A549 (cell line): ENCODE measurements at regions of chr19 and their contacts with region 1.

Region 1: GRCh38 chr19:57850553-57851017 is 926 bp downstream of the ZNF587 start:
- DNase-seq: peak; percentile 15 to 41
- ATAC-seq: peak; percentile 10 to 11; a peak in 3 of 6 replicates
- H3K4me3 ChIP-seq: peak overlapping the region; percentile 58
- H3K27ac ChIP-seq: peak overlapping the region; percentile 78 to 89
- H3K4me1 ChIP-seq: peaks cover 5% of the 10 kb centered on the region; the same call in 1 of the 3 replicates
- CTCF ChIP-seq: no peak
- EP300 ChIP-seq: no peak
- POLR2A ChIP-seq: no peak
- RAD21 ChIP-seq: no peak

Region 2: DNA sequence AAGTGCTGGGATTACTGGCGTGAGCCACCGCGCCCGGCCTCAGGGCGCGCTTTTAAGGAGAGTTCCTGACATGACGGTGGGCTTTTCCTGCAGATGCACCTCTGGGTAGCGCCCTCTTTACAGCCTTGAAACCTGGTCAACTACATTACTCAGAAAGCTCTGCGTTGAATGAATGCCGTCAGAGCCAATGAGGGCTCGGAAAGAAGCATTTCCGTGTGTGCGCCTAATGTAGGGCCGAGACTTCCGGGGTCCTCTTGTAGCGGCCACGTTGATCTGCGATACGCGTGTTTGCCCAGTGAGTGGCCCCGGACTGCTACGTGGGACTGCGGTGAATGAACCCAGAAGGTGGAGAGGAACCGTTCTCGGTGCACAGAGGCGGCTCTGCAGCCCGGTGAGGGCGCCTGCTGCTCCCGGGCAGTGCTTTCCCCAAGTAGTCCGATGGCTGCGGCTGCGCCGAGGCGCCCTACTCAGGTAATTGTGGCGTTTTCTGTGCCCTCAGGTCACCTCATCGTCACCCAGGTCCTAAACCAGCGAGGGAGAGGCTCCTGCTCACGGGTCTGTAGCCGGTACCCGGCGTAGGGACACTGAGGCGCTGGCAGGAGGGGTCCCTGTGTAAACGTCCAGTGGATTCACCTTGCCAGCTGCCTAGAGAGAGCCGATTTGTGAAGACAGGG is 31.0 kb before region 1 on chr19:
- CTCF ChIA-PET with region 1: no interaction called
- POLR2A ChIA-PET with region 1: interaction called, 13 read pairs
- DNase-seq: peak; percentile 97 to 99
- ATAC-seq: peak; percentile 93 to 94
- H3K4me3 ChIP-seq: peak overlapping the region; percentile 83
- H3K27ac ChIP-seq: peak overlapping the region; percentile 90 to 91
- H3K4me1 ChIP-seq: peaks cover 5% of the 10 kb centered on the region; the same call in 2 of the 3 replicates
- CTCF ChIP-seq: peak; percentile 30
- EP300 ChIP-seq: no peak
- POLR2A ChIP-seq: peak; percentile 90
- RAD21 ChIP-seq: peak; percentile 21 to 22; a peak in 2 of 5 replicates